HepG2 (cell line): ENCODE measurements at regions of chr12 and their contacts with region 1.

Region 1: GRCh38 chr12:6310783-6311610 is 515 bp downstream of the PLEKHG6 start:
- DNase-seq: no peak
- ATAC-seq: peak; percentile 9
- H3K4me3 ChIP-seq: peak overlapping the region; percentile 60 to 82 (median 75)
- H3K27ac ChIP-seq: peak overlapping the region; percentile 97
- H3K4me1 ChIP-seq: peaks cover 57% of the 10 kb centered on the region
- H3K27me3 ChIP-seq: peaks cover 0 to 4% of the 10 kb centered on the region in 2 experiments; a peak in 1 of 5 replicates
- CTCF ChIP-seq: peak; percentile 27; the same call in 1 of the 2 replicates
- EP300 ChIP-seq: no peak
- POLR2A ChIP-seq: no peak
- RAD21 ChIP-seq: no peak

Region 2: DNA sequence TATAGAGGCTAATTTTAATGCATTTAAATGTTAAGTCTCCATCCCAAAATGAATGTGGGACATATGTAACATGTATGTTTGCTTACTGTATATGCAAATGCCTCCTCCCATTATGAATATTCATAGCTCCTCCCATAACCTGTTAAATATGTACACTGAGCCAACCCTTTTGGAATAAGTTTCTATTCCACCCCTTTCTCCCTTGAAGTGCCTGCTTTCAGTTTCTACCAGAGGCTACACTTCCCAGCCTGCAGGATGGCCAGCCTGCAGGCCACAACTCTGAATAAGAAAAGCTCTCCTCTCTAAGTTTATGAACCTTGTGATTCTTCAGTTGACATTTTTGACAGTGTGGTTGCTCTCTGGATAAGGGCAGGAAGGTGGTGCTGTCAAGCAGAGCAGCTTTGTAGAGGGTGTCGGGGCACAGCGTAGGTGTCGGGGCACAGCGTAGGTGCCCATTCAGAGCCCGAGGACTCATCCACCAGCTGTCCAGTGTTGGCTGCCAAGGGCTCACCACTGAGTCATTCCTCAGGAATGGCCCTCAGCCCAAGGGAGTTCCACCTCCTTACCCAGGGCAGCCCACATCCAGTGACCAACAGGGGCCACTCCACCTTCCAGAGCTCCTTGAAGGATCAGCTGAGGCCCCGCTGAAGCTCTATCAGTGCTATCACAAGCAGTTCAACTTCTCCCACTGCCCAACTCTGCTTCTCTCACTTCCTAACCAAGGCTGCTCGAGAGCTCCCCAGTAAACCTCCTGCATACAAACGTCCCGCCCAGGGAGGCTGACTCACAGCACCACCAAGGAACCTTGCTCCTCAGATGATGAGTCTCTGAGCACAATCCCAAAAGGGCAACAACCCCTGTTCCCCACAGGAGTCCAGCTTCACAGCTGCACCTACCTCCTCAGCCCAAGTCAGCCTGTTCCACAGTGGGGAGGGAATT is 217.9 kb before region 1 on chr12:
- CTCF ChIA-PET with region 1: no interaction called
- POLR2A ChIA-PET with region 1: no interaction called
- in situ Hi-C with region 1: no loop called
- intact Hi-C with region 1: no loop called
- DNase-seq: no peak
- ATAC-seq: no peak
- H3K4me3 ChIP-seq: no peak overlapping the region
- H3K27ac ChIP-seq: no peak overlapping the region
- H3K4me1 ChIP-seq: peaks cover 34% of the 10 kb centered on the region
- H3K27me3 ChIP-seq: no peaks in the 10 kb centered on the region; a peak in 1 of 5 replicates
- CTCF ChIP-seq: no peak
- EP300 ChIP-seq: no peak
- POLR2A ChIP-seq: no peak
- RAD21 ChIP-seq: no peak

Region 3: GRCh38 chr12:6295094-6295811 is 15.7 kb before region 1 on chr12:
- CTCF ChIA-PET with region 1: no interaction called
- POLR2A ChIA-PET with region 1: interaction called, 32 read pairs
- in situ Hi-C with region 1: no loop called
- intact Hi-C with region 1: no loop called
- DNase-seq: peak; percentile 98
- ATAC-seq: peak; percentile 91
- H3K4me3 ChIP-seq: peak overlapping the region; percentile 5 to 51 (median 33); a peak in 4 of 6 replicates
- H3K27ac ChIP-seq: peak overlapping the region; percentile 100
- H3K4me1 ChIP-seq: peaks cover 75% of the 10 kb centered on the region
- H3K27me3 ChIP-seq: no peaks in the 10 kb centered on the region
- CTCF ChIP-seq: no peak
- EP300 ChIP-seq: peak; percentile 81 to 94
- POLR2A ChIP-seq: peak; percentile 19 to 79; a peak in 3 of 4 replicates
- RAD21 ChIP-seq: no peak

Region 4: DNA sequence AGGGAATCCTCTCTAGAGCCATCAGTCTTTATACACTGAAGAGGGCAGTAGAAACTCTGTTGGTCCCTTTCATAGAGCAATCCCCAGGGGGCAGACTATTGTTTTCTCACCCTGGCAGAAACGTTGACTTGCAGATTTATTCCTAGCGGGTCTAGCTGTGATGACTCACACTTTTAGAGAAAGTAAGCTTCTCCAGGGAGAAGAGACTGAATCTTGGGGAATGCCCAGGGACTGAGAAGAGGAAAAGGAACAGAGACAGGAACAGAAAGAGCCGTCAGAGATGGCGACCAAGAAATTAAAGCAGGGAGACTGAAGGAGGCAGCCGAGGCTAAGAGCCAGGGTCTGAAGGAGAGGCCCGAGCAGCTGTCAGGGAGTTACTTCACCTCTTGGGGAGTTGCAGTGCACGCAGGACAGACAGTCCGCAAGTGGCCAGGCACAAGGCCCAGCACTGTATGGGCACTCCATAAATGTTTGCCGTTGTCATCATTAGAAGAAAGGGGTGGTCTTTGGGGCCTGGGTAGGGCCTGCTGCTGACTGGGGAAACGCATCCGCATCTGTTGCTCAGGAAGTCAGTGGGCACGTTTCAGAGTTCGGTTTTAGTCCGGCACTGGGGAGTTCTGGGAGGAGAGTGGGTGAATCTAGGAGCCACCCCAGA is 12.5 kb after region 1 on chr12:
- CTCF ChIA-PET with region 1: no interaction called
- POLR2A ChIA-PET with region 1: interaction called, 17 read pairs
- in situ Hi-C with region 1: no loop called
- intact Hi-C with region 1: no loop called
- DNase-seq: peak; percentile 78
- ATAC-seq: peak; percentile 67
- H3K4me3 ChIP-seq: no peak overlapping the region
- H3K27ac ChIP-seq: peak overlapping the region; percentile 37
- H3K4me1 ChIP-seq: peaks cover 46% of the 10 kb centered on the region
- H3K27me3 ChIP-seq: no peaks in the 10 kb centered on the region
- CTCF ChIP-seq: peak; percentile 58
- EP300 ChIP-seq: no peak
- POLR2A ChIP-seq: no peak
- RAD21 ChIP-seq: peak; percentile 48; the same call in 1 of the 2 replicates

Region 5: DNA sequence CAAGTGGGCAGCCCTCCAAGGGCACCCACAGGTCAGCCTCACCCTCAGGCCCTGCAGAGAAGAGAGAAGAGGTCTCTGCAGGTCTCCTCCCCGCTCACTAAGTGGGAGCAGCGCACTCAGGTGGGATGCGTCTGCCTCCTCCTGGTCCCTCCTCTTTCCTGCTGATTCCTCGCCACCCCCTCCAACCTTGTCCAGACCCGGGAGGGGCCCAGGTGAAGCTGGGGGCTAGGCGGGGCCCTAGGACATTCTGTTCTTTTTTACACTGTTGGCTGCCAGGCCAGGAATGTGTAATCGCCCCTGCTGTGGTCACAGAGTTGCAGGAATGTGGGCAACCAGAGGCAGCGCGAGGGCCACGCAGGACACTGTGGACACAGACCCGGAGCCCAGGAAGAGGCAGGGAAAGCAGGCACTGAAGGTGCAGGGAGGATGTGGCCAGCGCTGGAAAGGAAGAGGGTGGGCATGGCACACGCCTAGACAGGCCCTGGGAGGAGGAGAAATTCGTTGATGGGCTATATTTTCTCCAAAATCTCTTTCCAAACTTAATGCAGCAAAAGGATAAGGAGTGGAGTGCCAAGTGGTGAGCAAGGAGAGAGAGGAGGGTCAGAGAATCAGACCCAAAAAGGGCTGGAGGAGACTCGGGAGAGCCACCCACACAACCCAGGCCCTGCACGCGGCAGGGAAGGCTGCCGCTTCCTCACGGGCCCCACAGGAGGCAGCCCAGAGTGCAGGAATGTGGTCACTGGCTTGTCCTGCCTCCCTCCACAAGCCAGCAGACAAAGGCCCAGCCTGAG is 65.3 kb after region 1 on chr12:
- CTCF ChIA-PET with region 1: no interaction called
- POLR2A ChIA-PET with region 1: interaction called, 11 read pairs
- in situ Hi-C with region 1: no loop called
- intact Hi-C with region 1: no loop called
- DNase-seq: peak; percentile 64
- ATAC-seq: peak; percentile 85
- H3K4me3 ChIP-seq: peak overlapping the region; percentile 41 to 73 (median 57)
- H3K27ac ChIP-seq: peak overlapping the region; percentile 16
- H3K4me1 ChIP-seq: peaks cover 73% of the 10 kb centered on the region
- H3K27me3 ChIP-seq: peaks cover 0 to 21% of the 10 kb centered on the region in 2 experiments; a peak in 3 of 5 replicates
- CTCF ChIP-seq: peak; percentile 66
- EP300 ChIP-seq: no peak
- POLR2A ChIP-seq: peak in 1 of 2 experiments; percentile 53; a peak in 2 of 4 replicates
- RAD21 ChIP-seq: peak; percentile 34; the same call in 1 of the 2 replicates

Region 6: DNA sequence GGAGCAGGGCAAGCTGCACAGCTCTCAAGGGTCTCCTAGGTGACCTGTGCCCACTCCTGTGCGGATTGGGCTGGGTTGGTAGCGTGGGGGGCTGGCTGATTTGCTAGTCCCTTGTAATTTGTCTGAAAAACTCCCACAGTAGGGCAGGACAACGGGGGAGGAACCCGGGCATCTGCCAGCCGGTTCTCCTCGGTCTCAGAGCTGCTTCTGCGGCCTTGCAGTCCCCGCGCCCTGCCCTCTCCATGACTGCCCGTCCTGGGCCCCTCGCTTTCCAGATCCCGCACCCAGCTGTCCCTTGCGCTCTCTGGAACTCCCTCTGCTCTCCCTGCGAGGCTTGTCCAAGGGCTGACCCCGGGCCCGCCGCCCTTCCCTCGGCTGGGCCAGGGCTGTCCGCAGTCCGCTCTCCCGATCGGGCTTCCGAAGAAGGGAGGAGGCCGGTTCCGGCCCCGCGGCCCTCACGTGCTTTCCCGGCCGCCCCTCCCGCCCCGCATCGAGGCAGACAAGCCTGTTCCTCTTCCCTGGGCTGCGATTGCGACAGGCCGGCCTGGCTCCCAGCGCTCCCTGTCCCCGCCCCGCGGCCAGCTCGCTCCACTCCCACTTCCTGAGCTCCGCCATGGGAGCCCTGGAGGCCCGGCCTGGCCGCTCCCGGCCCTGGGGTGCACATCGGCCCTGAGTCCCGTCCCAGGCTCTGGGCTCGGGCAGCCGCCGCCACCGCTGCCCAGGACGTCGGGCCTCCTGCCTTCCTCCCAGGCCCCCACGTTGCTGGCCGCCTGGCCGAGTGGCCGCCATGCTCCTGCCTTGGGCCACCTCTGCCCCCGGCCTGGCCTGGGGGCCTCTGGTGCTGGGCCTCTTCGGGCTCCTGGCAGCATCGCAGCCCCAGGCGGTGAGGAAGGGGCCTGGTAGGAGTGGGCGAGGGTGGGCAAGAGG is 72.8 kb after region 1 on chr12 and contains the start of gene LTBR:
- CTCF ChIA-PET with region 1: no interaction called
- POLR2A ChIA-PET with region 1: interaction called, 12 read pairs
- in situ Hi-C with region 1: no loop called
- intact Hi-C with region 1: no loop called
- DNase-seq: peak; percentile 83
- ATAC-seq: peak; percentile 91
- H3K4me3 ChIP-seq: peak within 1 kb of the TSS; percentile 81 to 95 (median 87)
- H3K27ac ChIP-seq: peak within 1 kb of the TSS; percentile 86
- H3K4me1 ChIP-seq: peaks cover 59% of the 10 kb centered on the region
- H3K27me3 ChIP-seq: no peaks in the 10 kb centered on the region; a peak in 1 of 5 replicates
- CTCF ChIP-seq: peak; percentile 52; the same call in 1 of the 2 replicates
- EP300 ChIP-seq: peak in 1 of 2 experiments; percentile 33; a peak in 1 of 4 replicates
- POLR2A ChIP-seq: peak; percentile 67 to 74; a peak in 3 of 4 replicates
- RAD21 ChIP-seq: peak; percentile 36; the same call in 1 of the 2 replicates
- total RNA-seq, gene LTBR: 12.1 and 34.8 TPM in 2 replicates